ENCODE measurements at regions of chr3 and their contacts with region 1.

Region 1: DNA sequence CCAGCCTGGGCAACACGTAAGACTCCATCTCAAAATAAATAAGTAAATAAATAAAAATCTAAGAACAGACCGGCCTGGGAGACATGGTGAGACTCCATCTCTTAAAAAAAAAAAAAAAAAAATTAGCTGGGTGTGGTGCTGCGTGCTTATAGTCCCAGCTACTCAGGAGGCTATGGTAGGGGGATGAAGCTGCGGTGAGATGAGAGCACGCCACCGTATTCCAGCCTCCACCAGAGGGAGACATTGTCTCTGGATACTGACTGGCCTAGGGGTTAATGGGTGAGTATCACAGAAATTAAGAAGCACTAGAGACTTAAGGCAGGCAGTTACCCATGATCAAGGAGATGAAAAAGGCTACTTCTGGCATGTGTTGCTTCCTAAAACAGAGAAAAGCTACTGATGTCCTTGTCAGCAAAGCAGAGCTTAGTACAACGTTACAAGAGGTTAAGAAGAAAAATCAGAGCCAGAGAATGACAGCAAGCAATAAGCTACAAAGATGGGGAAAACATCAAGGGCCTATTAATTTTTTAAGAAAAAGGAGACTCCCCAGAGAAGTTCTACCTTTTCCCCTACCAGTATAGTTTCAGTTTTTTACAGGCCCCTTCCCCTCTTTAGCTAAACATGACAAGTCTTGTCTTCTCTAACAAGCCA is 8.6 kb downstream of the TFRC start:
- DNase-seq: peak; percentile 81
- H3K4me3 Mint-ChIP-seq: no peak overlapping the region
- H3K27ac Mint-ChIP-seq: no peak overlapping the region
- H3K4me1 Mint-ChIP-seq: peaks cover 34% of the 10 kb centered on the region
- H3K27me3 Mint-ChIP-seq: no peaks in the 10 kb centered on the region

Region 2: GRCh38 chr3:196047391-196048030 is 25.8 kb before region 1 on chr3:
- CTCF ChIA-PET with region 1: interaction called, 25 read pairs
- POLR2A ChIA-PET with region 1: interaction called, 4 read pairs
- DNase-seq: no peak
- H3K4me3 Mint-ChIP-seq: no peak overlapping the region
- H3K27ac Mint-ChIP-seq: no peak overlapping the region
- H3K4me1 Mint-ChIP-seq: no peaks in the 10 kb centered on the region
- H3K27me3 Mint-ChIP-seq: no peaks in the 10 kb centered on the region

Region 3: GRCh38 chr3:196108083-196108743 is 34.9 kb after region 1 on chr3:
- CTCF ChIA-PET with region 1: no interaction called
- POLR2A ChIA-PET with region 1: no interaction called
- DNase-seq: no peak
- H3K4me3 Mint-ChIP-seq: no peak overlapping the region
- H3K27ac Mint-ChIP-seq: no peak overlapping the region
- H3K4me1 Mint-ChIP-seq: peaks cover 22% of the 10 kb centered on the region
- H3K27me3 Mint-ChIP-seq: no peaks in the 10 kb centered on the region

Region 4: DNA sequence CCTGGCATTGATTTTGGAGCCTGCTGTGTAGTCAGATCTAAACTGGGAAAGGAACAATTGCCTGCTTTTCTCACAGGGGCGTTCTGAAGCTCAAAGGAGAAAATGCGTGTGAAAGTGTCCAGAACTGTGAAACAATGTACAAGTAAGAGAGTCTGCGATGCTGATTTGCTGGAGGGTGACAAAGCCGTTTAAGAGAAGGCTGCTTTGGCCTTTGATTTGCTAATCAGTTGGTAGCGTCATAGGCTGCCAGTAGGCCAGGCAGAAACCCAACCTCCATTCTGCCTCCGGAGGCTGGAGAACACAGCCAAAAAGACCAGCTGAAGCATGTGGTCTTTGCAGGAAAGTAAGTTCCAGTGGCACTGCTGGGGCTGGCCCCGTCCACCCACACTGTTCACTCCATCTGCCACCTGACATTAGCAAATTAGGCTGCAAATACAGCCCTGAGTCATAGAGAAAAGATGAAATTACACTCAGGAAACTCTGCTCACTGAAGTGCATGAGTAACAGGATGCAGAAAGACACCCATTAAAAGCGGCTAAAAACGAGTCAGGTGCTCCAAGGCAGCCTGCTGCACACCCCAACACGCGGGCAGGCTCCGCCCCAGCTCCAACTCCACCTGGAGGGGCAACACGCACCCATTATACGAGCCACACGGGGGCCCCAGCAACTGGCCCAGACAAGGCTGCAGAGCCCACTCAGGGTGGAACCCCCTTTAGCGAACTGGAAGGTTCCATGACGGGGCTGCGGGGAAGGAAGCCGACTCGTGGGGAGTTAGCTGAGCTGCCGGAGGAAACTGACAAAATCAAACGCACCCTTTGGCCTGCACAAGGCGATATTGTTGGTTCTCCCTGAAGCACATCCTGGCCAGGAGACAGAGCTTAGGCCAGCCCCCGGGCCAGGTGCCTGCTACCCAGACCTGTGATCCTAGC is 106.3 kb after region 1 on chr3:
- CTCF ChIA-PET with region 1: interaction called, 10 read pairs
- POLR2A ChIA-PET with region 1: no interaction called
- DNase-seq: peak; percentile 83
- H3K4me3 Mint-ChIP-seq: peak overlapping the region; percentile 37
- H3K27ac Mint-ChIP-seq: peak overlapping the region; percentile 95
- H3K4me1 Mint-ChIP-seq: peaks cover 63% of the 10 kb centered on the region
- H3K27me3 Mint-ChIP-seq: no peaks in the 10 kb centered on the region

Region 5: GRCh38 chr3:196192036-196192523 is 118.8 kb after region 1 on chr3:
- CTCF ChIA-PET with region 1: interaction called, 40 read pairs
- POLR2A ChIA-PET with region 1: no interaction called
- DNase-seq: no peak
- H3K4me3 Mint-ChIP-seq: peak overlapping the region; percentile 22
- H3K27ac Mint-ChIP-seq: peak overlapping the region; percentile 95
- H3K4me1 Mint-ChIP-seq: peaks cover 51% of the 10 kb centered on the region
- H3K27me3 Mint-ChIP-seq: no peaks in the 10 kb centered on the region

Region 6: DNA sequence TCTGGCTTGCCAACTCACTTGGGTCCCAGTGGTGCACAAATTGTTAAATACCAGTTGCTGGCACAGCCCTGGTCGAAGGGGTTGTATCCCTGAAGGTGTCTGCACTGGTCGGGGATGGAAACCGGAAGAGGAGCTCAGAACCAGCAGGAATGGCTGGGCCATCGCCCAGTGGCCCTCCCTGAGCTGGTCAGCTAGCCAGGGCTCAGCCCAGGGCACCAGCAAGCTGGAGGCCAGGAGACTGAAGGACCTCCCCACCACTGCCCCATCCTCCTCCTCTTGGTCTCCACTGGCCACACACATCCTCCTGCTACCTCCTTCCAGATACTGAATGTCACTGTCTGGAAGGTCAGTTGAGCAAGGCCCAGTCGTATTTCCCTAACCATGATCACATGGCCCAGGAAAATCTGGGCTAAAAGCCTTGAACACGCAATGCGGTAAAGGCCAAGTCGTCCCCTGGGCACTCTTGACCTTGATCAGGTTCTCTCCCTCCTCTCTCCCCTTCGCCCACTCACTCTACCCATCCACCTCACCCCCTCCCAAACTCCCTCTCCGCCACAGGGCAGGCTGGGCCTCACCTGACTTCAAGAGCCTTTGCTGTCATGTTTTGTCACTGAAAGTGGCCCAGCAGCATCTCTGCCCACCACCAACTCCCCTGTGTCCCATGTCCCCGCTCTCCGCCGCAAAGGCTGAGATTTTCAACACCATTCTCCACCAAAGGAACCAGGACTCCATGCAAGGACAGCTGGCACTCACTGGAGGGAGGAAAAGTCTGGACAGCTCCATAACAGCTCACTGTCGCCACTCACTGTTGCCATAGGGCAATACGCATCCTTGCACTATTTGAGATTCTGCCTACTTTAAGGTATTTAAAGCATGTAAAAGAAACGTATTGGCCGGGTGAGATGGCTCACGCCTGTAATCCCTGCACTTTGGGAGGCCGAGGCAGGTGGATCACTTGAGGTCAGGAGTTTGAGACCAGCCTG is 125.7 kb after region 1 on chr3:
- CTCF ChIA-PET with region 1: interaction called, 40 read pairs
- POLR2A ChIA-PET with region 1: no interaction called
- DNase-seq: no peak
- H3K4me3 Mint-ChIP-seq: no peak overlapping the region
- H3K27ac Mint-ChIP-seq: no peak overlapping the region
- H3K4me1 Mint-ChIP-seq: peaks cover 23% of the 10 kb centered on the region
- H3K27me3 Mint-ChIP-seq: peaks cover 14% of the 10 kb centered on the region

Region 7: GRCh38 chr3:196254376-196255283 is 181.3 kb after region 1 on chr3:
- CTCF ChIA-PET with region 1: no interaction called
- POLR2A ChIA-PET with region 1: no interaction called
- DNase-seq: no peak
- H3K4me3 Mint-ChIP-seq: no peak overlapping the region
- H3K27ac Mint-ChIP-seq: no peak overlapping the region
- H3K4me1 Mint-ChIP-seq: peaks cover 3% of the 10 kb centered on the region
- H3K27me3 Mint-ChIP-seq: no peaks in the 10 kb centered on the region